PC-3 (cell line): ENCODE measurements at regions of chr4 and their contacts with region 1.

Region 1: GRCh38 chr4:47914220-47914925 is at the start of gene NFXL1:
- DNase-seq: peak; percentile 92
- ATAC-seq: peak; percentile 93
- H3K4me3 ChIP-seq: peak within 1 kb of the TSS; percentile 86
- H3K27ac ChIP-seq: peak within 1 kb of the TSS; percentile 64
- H3K4me1 ChIP-seq: peaks cover 25% of the 10 kb centered on the region
- H3K27me3 ChIP-seq: no peaks in the 10 kb centered on the region
- CTCF ChIP-seq: no peak
- total RNA-seq, gene NFXL1: 13.2 and 14.7 TPM in 2 replicates

Region 2: DNA sequence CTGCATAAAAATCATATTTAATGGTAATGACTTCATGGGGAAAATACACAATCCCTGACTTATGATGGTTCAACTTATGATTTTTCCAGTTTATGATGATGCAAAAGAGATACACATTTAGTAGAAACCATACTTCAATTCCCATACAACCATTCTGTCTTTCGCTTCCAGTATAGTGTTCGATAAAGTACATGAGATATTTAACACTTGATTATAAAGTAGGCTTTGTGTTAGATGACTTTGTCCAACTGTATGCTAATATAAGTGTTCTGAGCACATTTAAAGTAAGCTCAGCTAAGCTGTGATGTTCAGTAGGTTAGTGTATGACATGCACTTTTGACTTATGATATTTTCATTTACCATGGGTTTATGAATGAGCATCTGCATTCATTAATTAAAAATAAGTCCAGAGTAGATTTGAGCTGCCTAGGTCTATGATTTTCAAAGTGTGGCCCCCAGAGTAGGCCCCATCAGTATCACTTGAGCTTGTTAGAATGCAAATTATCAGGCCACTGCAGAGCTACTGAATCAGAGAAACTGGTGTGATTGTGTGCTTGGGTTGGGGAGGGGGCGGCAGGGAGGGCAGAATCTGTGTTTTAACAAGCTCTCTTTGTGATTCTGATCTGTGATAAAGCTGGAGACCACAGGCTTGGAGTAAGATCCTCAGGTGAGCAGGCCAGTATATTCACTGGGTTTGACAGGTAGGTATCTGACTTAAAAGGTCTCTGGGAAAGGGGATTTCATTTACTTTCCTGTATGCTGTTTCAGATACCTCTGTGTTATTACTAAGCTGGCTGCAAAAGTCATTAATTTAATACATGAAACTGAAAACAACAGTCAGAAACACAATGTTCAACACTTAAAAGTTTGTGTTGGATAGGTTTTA is 420.9 kb before region 1 on chr4:
- CTCF ChIA-PET with region 1: no interaction called
- POLR2A ChIA-PET with region 1: interaction called, 15 read pairs
- intact Hi-C with region 1: no loop called
- DNase-seq: no peak
- ATAC-seq: no peak
- H3K4me3 ChIP-seq: no peak overlapping the region
- H3K27ac ChIP-seq: no peak overlapping the region
- H3K4me1 ChIP-seq: no peaks in the 10 kb centered on the region
- H3K27me3 ChIP-seq: no peaks in the 10 kb centered on the region
- CTCF ChIP-seq: no peak

Region 3: GRCh38 chr4:48065587-48066052 is 151.2 kb after region 1 on chr4:
- CTCF ChIA-PET with region 1: no interaction called
- POLR2A ChIA-PET with region 1: no interaction called
- intact Hi-C with region 1: no loop called
- DNase-seq: no peak
- ATAC-seq: no peak
- H3K4me3 ChIP-seq: no peak overlapping the region
- H3K27ac ChIP-seq: no peak overlapping the region
- H3K4me1 ChIP-seq: no peaks in the 10 kb centered on the region
- H3K27me3 ChIP-seq: no peaks in the 10 kb centered on the region
- CTCF ChIP-seq: no peak

Region 4: DNA sequence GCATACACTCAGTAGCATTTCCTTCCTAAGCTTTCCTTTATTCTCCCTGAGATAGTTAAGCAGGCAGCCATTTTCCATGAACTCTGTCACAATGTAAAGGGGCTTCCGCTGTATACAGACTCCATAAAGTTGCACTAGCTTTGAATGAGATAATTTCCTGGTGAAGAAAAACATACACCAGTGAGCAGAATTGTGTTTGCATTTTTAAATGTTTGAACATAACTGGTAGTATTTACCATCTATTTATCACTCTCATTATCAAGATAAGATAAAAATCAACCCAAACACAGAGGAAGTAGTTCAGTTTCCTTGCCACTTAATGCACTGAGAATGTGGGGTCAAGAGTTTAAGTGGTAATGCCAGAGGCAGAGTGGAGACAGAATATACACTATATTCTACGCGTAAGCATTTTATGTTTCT is 165.6 kb after region 1 on chr4:
- CTCF ChIA-PET with region 1: no interaction called
- POLR2A ChIA-PET with region 1: no interaction called
- intact Hi-C with region 1: loop called (anchors 1 kb)
- DNase-seq: peak; percentile 88
- ATAC-seq: peak; percentile 85
- H3K4me3 ChIP-seq: peak overlapping the region; percentile 46
- H3K27ac ChIP-seq: peak overlapping the region; percentile 83
- H3K4me1 ChIP-seq: peaks cover 58% of the 10 kb centered on the region
- H3K27me3 ChIP-seq: no peaks in the 10 kb centered on the region
- CTCF ChIP-seq: no peak

Region 5: GRCh38 chr4:48162162-48162561 is 247.8 kb after region 1 on chr4:
- CTCF ChIA-PET with region 1: no interaction called
- POLR2A ChIA-PET with region 1: no interaction called
- intact Hi-C with region 1: no loop called
- DNase-seq: peak; percentile 31
- ATAC-seq: peak; percentile 61
- H3K4me3 ChIP-seq: no peak overlapping the region
- H3K27ac ChIP-seq: peak overlapping the region; percentile 18; the same call in 1 of the 2 replicates
- H3K4me1 ChIP-seq: peaks cover 9% of the 10 kb centered on the region
- H3K27me3 ChIP-seq: no peaks in the 10 kb centered on the region
- CTCF ChIP-seq: no peak